ENCODE measurements at regions of chr3 and their contacts with region 1.

Region 1: DNA sequence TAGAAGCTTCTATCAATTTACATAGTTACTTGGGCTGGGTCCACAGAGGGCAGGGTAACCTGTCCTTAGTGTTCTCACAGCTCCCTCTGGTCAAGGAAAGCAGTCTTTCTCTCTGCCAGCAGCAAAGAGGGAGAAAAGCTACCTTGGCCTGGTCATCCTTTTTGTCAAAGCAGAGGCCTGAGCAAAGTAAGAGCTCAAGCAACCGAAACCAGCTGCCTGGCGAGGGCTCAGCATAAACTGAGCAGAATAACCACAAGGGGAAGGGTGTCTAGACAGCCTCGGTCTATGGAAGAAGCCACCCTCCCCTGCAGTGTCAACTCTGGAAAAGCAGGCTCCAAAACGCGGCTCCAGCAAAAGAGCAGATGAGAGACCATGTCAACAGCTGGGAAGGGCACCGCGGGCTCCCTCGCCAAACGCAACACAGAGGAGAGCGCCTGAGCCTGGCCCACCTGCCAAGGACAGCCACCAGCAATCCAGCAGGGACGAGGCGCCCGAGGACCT is 17.4 kb downstream of the LRIG1 start:
- DNase-seq: peak in 4 of 5 donors; percentile 35 to 51 (median 45)
- H3K4me3 ChIP-seq: no peak overlapping the region
- H3K27ac ChIP-seq: peak overlapping the region; percentile 9 to 76
- H3K4me1 ChIP-seq: peaks cover 35% of the 10 kb centered on the region
- H3K27me3 ChIP-seq: no peaks in the 10 kb centered on the region
- CTCF ChIP-seq: no peak
- EP300 ChIP-seq: no peak
- POLR2A ChIP-seq: no peak

Region 2: DNA sequence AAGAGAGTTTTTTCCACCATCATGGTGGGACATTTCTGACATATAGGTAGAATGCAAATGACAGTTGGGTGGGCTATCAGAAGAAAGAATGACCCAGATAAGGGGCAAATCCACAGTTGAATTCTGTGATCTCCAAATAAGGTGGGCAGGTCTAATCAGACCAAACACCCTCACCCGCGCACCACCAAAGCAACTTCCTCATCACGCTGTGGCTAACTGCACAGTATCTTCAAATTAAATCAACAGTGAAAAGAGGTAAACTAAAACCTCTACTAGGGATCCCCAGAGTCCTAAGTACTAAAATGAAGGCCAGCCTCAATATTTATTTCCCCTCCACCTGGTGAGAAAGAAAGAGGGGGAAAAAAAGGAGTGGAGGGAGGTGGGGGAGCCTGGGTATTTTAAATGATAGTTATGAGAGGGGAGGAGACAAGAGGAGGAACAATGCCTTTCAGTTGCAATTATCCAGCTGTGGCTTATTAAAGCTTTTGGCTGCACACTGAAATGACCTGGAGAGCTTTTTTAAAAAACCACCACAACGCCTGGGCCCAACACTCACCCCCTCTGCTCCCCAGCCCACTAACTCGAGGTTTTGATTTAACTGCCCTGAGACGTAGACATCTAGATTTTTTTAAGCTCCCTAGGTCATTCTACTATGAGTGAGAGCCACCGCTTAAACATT is 43.7 kb before region 1 on chr3:
- intact Hi-C with region 1: loop called in 1 of 4 experiments (anchors 10 kb)
- DNase-seq: peak in 1 of 5 donors; percentile 34
- H3K4me3 ChIP-seq: no peak overlapping the region
- H3K27ac ChIP-seq: peak overlapping the region in 1 of 2 donors; percentile 48
- H3K4me1 ChIP-seq: peaks cover 59% of the 10 kb centered on the region
- H3K27me3 ChIP-seq: no peaks in the 10 kb centered on the region
- CTCF ChIP-seq: no peak
- EP300 ChIP-seq: no peak
- POLR2A ChIP-seq: no peak

Region 3: GRCh38 chr3:66450390-66451022 is 33.0 kb before region 1 on chr3:
- intact Hi-C with region 1: loop called in 1 of 4 experiments (anchors 5 kb)
- DNase-seq: peak; percentile 59 to 83 (median 76)
- H3K4me3 ChIP-seq: no peak overlapping the region
- H3K27ac ChIP-seq: peak overlapping the region in 1 of 2 donors; percentile 34
- H3K4me1 ChIP-seq: peaks cover 28% of the 10 kb centered on the region
- H3K27me3 ChIP-seq: no peaks in the 10 kb centered on the region
- CTCF ChIP-seq: no peak
- EP300 ChIP-seq: no peak
- POLR2A ChIP-seq: no peak

Region 4: GRCh38 chr3:67635257-67635656 is 1151.8 kb after region 1 on chr3:
- intact Hi-C with region 1: no loop called
- DNase-seq: no peak
- H3K4me3 ChIP-seq: no peak overlapping the region
- H3K27ac ChIP-seq: no peak overlapping the region
- H3K4me1 ChIP-seq: no peaks in the 10 kb centered on the region
- H3K27me3 ChIP-seq: no peaks in the 10 kb centered on the region
- CTCF ChIP-seq: no peak
- EP300 ChIP-seq: no peak
- POLR2A ChIP-seq: no peak

Measured in ovary (tissue), 10 donors.